AG04449 (cell line): ENCODE measurements at regions of chr15 and their contacts with region 1.

Region 1: GRCh38 chr15:39213385-39213840 is 367.5 kb upstream of the THBS1 start:
- DNase-seq: peak; percentile 99
- H3K4me3 ChIP-seq: no peak overlapping the region
- CTCF ChIP-seq: no peak

Region 2: DNA sequence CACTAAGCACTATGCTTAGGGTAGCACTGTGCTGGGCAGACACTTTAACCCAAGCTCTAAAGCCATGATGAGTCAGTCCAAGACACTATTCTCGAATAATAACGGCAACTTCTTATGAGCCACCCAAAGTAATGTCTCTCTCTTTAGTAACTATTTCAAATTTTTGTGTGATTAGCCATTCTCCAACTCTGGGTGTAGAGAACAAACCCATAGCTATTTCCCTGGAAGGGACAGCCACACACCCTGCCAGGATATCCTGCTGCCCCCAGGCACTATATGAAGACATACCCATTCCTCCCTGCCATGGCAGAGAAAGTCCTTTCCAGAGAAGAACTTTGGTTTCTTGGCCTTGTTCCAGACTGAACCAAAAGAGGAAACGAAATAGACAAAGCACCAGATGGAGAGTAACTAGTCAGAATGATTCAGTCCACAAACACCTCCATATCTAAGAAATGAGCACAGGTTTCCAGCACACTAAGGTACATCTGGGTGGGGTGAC is 17.4 kb before region 1 on chr15:
- CTCF ChIA-PET with region 1: interaction called, 4 read pairs
- POLR2A ChIA-PET with region 1: interaction called, 14 read pairs
- DNase-seq: peak; percentile 70
- H3K4me3 ChIP-seq: no peak overlapping the region
- CTCF ChIP-seq: no peak